ENCODE measurements at regions of chr12 and their contacts with region 1.

Region 1: DNA sequence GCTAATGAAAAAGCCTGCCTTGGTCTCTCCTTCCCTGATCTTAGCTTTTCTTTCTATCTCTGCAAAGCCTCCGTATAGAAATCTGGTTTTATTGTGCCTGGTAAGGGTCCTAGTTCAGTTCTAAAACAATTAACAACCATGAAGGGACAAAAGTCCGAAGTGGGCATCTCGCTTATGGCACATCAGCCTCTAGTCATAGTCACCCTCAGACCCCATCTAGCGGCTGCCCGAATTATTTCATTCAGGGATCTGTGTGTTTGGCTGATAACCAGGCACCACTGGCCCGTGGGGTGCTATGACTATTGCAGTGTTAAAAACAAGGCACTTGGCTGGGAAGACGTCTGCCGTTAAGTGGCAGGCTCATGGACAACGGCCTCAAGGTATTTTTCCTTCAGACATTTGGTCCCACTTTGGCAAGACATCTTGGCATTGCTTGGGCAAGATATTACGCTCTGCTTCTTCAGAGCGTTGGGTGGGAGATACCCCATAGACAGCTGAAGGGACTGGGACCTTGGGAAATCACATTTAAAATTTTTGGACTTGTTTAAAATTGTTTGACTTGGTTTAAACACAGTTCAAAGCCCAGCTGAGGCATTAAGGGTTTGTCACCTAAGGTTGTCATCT is 87.1 kb downstream of the SINHCAF start:
- DNase-seq: peak; percentile 79
- CTCF ChIP-seq: peak; percentile 72

Region 2: GRCh38 chr12:30847259-30847658 is 391.6 kb before region 1 on chr12:
- in situ Hi-C with region 1: loop called (anchors 10 kb)
- DNase-seq: no peak
- CTCF ChIP-seq: peak; percentile 67

Region 3: GRCh38 chr12:31117203-31118011 is 121.5 kb before region 1 on chr12:
- in situ Hi-C with region 1: loop called (anchors 25 kb)
- DNase-seq: peak; percentile 72
- CTCF ChIP-seq: peak; percentile 79